ENCODE measurements at regions of chr5 and their contacts with region 1.

Region 1: DNA sequence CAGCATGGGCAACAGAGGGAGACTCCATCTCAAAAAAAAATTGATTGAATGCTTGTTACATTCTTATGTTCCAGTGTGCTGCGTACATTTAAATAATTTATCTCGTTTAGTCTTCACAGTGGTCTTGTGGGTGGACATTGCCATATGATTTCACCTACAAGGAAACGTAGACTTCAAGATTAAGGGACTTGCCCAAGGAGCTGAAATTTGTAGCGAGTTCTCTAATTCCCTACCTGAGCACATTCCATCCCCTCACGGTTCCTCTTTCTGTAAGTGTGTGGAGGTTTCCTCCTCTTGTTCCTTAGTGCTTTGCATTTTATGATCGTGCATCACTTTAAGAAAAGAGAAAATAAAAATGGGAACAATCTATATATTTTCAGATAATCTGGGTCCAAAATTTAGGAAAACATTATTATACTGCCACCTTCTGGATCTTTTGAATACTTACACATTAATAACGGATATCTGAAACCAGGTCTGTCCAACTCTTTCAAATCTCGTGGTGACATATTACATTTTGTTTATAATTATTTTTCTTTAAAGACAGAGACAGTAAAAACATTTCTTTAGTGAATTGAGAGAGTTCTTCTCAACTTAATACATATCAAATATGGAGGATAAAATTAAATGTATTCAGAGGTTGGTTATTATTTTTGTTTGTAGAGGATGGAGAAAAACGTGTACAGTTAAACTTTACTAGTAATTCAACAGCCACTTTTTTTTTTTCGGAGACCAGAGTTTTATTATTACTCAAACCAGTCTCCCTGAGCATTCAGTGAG is 29.9 kb upstream of the C7 start:
- DNase-seq: peak; percentile 27 to 52 (median 44)
- ATAC-seq: peak; percentile 83
- H3K4me3 ChIP-seq: no peak overlapping the region
- H3K27ac ChIP-seq: no peak overlapping the region
- H3K4me1 ChIP-seq: no peaks in the 10 kb centered on the region
- H3K27me3 ChIP-seq: no peaks in the 10 kb centered on the region
- CTCF ChIP-seq: peak in 2 of 3 experiments; percentile 54 to 82; a peak in 4 of 6 replicates
- EP300 ChIP-seq: no peak
- POLR2A ChIP-seq: no peak
- RAD21 ChIP-seq: peak; percentile 90 to 91

Region 2: GRCh38 chr5:39599721-39600431 is 1279.5 kb before region 1 on chr5:
- CTCF ChIA-PET with region 1: no interaction called
- POLR2A ChIA-PET with region 1: no interaction called
- in situ Hi-C with region 1: loop called (anchors 25 kb)
- intact Hi-C with region 1: no loop called
- DNase-seq: peak in 3 of 4 experiments; percentile 18 to 52 (median 21)
- ATAC-seq: peak; percentile 76
- H3K4me3 ChIP-seq: no peak overlapping the region
- H3K27ac ChIP-seq: no peak overlapping the region
- H3K4me1 ChIP-seq: no peaks in the 10 kb centered on the region
- H3K27me3 ChIP-seq: no peaks in the 10 kb centered on the region
- CTCF ChIP-seq: peak; percentile 27 to 68 (median 36); a peak in 3 of 6 replicates
- EP300 ChIP-seq: no peak
- POLR2A ChIP-seq: no peak
- RAD21 ChIP-seq: peak; percentile 53 to 60

Region 3: GRCh38 chr5:39970117-39970798 is 909.1 kb before region 1 on chr5:
- CTCF ChIA-PET with region 1: no interaction called
- POLR2A ChIA-PET with region 1: no interaction called
- in situ Hi-C with region 1: loop called (anchors 25 kb)
- intact Hi-C with region 1: no loop called
- DNase-seq: no peak
- ATAC-seq: no peak
- H3K4me3 ChIP-seq: no peak overlapping the region
- H3K27ac ChIP-seq: no peak overlapping the region
- H3K4me1 ChIP-seq: no peaks in the 10 kb centered on the region
- H3K27me3 ChIP-seq: no peaks in the 10 kb centered on the region
- CTCF ChIP-seq: no peak
- EP300 ChIP-seq: no peak
- POLR2A ChIP-seq: no peak
- RAD21 ChIP-seq: no peak

Region 4: DNA sequence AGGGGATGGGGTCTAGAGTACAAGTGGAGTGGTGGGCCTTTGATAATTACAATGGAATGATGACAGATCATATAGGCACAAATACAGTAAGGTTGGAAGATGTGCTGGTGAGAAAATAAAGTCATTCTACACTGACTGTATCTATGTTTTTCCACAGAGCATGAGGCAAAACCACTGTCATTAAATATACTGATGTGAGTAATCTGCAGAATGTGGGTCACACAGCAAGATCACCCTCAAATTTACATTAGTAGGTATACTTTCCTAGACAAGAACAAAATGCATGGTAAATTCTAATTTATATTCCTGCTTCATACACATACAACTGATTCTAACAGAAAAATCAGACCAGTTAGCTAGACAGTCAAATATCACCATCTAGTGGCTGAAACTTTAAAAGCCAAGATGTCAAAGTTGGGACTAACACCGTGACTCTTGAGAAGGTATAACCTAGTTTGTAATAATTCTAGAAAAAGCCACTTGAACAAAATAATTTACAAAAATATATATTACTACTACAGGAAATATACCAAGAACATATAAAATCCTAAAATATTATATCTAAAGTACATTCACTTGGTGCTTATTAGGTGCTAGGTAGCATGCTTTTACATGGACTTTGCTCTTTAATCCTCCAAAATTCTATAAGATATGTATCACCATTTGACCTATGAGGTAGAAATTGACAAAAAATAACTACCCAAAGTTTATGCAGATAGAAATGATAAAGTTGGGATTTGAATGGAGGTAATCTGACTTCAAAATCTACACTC is 143.1 kb before region 1 on chr5:
- CTCF ChIA-PET with region 1: no interaction called
- POLR2A ChIA-PET with region 1: interaction called, 3 read pairs
- in situ Hi-C with region 1: no loop called
- intact Hi-C with region 1: loop called (anchors 5 kb)
- DNase-seq: peak; percentile 55 to 73 (median 62)
- ATAC-seq: peak; percentile 92
- H3K4me3 ChIP-seq: no peak overlapping the region
- H3K27ac ChIP-seq: no peak overlapping the region
- H3K4me1 ChIP-seq: peaks cover 0 to 7% of the 10 kb centered on the region in 2 experiments; a peak in 2 of 5 replicates
- H3K27me3 ChIP-seq: no peaks in the 10 kb centered on the region
- CTCF ChIP-seq: peak; percentile 57 to 87 (median 65); a peak in 5 of 6 replicates
- EP300 ChIP-seq: no peak
- POLR2A ChIP-seq: no peak
- RAD21 ChIP-seq: peak; percentile 73 to 86

Region 5: DNA sequence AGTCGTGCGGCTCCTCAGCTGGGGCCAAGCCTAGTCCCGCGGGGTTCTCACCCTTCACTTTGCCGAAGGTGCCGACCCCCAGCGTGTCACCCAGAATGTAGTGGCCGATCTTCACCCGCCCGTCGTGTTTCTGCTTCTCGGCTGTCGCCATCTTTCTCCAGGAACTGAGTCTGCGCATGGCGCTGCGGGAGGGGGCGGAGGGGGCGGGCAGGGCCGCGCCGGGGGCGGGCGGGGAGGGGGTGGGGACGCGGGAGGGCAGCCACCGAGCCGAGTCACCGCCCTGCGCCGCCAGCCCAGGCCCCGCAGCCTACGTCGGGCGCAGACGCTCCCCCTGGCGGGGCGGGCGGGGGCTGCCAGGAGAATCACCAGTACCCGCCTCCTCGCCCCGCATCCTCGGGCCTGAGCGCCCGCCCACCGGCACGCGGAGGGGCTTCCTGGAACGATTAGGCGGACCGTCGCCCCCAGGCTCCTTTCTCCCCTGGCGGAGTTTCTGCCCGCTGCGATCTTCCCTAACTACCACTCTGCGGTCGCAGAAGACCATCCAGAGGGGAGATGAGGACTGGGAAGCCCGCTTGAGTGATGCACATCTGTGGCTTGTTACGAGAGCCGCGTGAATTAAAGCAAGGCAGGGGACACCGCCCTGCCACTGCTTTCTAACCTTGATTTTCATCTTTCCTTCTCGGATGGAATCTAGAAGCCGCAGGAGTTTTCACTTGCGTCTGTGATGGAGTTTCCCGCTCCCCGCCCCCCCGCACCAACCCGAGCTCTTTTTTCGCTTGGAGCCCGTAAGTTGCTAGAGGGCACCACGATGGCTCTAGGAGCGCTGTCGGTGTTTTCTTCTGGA is 81.1 kb before region 1 on chr5 and contains the start of gene PRKAA1:
- CTCF ChIA-PET with region 1: interaction called, 3 read pairs
- POLR2A ChIA-PET with region 1: no interaction called
- in situ Hi-C with region 1: no loop called
- intact Hi-C with region 1: loop called (anchors 2 kb)
- DNase-seq: peak; percentile 94 to 96 (median 95)
- ATAC-seq: peak; percentile 85
- H3K4me3 ChIP-seq: peak within 1 kb of the TSS; percentile 94
- H3K27ac ChIP-seq: peak within 1 kb of the TSS; percentile 92
- H3K4me1 ChIP-seq: peaks cover 26 to 35% of the 10 kb centered on the region in 2 experiments
- H3K27me3 ChIP-seq: no peaks in the 10 kb centered on the region
- CTCF ChIP-seq: peak; percentile 53 to 85 (median 72); a peak in 5 of 6 replicates
- EP300 ChIP-seq: no peak; the same call in 1 of the 2 replicates
- POLR2A ChIP-seq: peak; percentile 93
- RAD21 ChIP-seq: peak in 1 of 2 experiments; percentile 48; a peak in 2 of 4 replicates
- polyA plus RNA-seq, gene PRKAA1: 24.5 to 37.3 TPM